ENCODE measurements at regions of chr11 and their contacts with region 1.

Region 1: DNA sequence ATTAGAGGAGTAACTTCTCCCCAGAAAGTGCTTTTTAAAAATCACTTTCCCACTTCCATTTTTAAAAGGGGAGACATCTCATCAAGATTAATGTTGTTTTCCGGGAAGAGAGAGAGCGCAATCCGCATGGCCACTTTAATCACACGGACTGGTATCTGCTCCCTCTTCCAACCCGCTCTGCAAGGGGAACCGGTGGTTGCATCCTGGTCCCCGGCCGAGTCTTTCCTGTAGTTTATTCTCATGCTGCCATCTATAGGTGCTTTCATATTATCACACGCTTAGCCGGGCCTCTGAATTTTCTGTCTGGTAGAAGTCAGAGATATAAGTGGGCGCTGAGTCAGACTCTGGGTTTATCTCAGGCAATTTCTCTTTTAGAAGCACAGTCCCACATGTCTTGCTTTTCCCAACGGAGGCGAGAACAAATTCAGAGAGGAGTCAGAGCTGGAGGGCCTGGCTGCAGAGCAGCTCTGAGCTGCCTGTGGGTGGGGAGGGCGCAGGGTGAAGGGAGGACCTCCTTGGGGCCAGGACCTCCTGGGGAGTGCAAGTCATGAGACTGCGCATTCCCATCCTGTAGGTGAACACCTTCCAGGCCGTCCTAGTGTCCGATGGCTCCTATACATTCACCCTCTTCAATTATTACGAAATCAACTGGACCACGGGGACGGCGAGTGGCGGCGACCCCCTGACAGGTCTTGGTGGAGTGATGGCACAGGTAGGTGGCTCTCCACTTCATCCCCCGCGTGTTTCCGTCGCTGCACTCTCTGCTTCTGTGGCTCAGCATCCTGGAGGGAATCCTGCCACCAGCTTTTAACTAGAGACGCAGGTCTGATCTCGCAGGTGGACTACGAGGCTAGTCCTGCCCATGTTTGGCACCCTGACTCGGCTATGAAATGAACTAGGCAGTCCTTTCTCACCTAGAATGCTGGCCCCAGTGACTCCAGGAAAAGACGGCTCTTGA is 11.7 kb downstream of the TECTA start:
- DNase-seq: peak in 6 of 9 donors; percentile 1 to 43 (median 30)
- ATAC-seq: peak; percentile 72
- H3K4me3 ChIP-seq: no peak overlapping the region
- H3K4me3 Mint-ChIP-seq: no peak overlapping the region
- H3K27ac ChIP-seq: no peak overlapping the region
- H3K27ac Mint-ChIP-seq: no peak overlapping the region
- H3K4me1 ChIP-seq: no peaks in the 10 kb centered on the region
- H3K4me1 Mint-ChIP-seq: peaks cover 0 to 5% (median 0%) of the 10 kb centered on the region in 7 donors
- H3K27me3 ChIP-seq: no peaks in the 10 kb centered on the region
- H3K27me3 Mint-ChIP-seq: peaks cover 5 to 32% (median 15%) of the 10 kb centered on the region in 5 donors

Region 2: GRCh38 chr11:120682866-120683265 is 429.9 kb before region 1 on chr11:
- CTCF ChIA-PET with region 1: no interaction called
- POLR2A ChIA-PET with region 1: no interaction called
- intact Hi-C with region 1: loop called in 1 of 2 experiments (anchors 10 kb)
- DNase-seq: no peak
- ATAC-seq: no peak
- H3K4me3 ChIP-seq: no peak overlapping the region
- H3K4me3 Mint-ChIP-seq: no peak overlapping the region
- H3K27ac ChIP-seq: no peak overlapping the region
- H3K27ac Mint-ChIP-seq: no peak overlapping the region
- H3K4me1 ChIP-seq: no peaks in the 10 kb centered on the region
- H3K4me1 Mint-ChIP-seq: peaks cover 0 to 1% (median 0%) of the 10 kb centered on the region in 7 donors
- H3K27me3 ChIP-seq: no peaks in the 10 kb centered on the region
- H3K27me3 Mint-ChIP-seq: peaks cover 7 to 49% (median 30%) of the 10 kb centered on the region in 5 donors

Region 3: GRCh38 chr11:120801801-120802689 is 310.7 kb before region 1 on chr11:
- CTCF ChIA-PET with region 1: no interaction called
- POLR2A ChIA-PET with region 1: no interaction called
- intact Hi-C with region 1: loop called in 1 of 2 experiments (anchors 5 kb)
- DNase-seq: peak in 7 of 9 donors; percentile 6 to 40 (median 19)
- ATAC-seq: peak; percentile 44
- H3K4me3 ChIP-seq: no peak overlapping the region
- H3K4me3 Mint-ChIP-seq: no peak overlapping the region
- H3K27ac ChIP-seq: no peak overlapping the region
- H3K27ac Mint-ChIP-seq: no peak overlapping the region
- H3K4me1 ChIP-seq: no peaks in the 10 kb centered on the region
- H3K4me1 Mint-ChIP-seq: peaks cover 0 to 8% (median 0%) of the 10 kb centered on the region in 7 donors
- H3K27me3 ChIP-seq: no peaks in the 10 kb centered on the region
- H3K27me3 Mint-ChIP-seq: peaks cover 6 to 27% (median 17%) of the 10 kb centered on the region in 5 donors

Region 4: DNA sequence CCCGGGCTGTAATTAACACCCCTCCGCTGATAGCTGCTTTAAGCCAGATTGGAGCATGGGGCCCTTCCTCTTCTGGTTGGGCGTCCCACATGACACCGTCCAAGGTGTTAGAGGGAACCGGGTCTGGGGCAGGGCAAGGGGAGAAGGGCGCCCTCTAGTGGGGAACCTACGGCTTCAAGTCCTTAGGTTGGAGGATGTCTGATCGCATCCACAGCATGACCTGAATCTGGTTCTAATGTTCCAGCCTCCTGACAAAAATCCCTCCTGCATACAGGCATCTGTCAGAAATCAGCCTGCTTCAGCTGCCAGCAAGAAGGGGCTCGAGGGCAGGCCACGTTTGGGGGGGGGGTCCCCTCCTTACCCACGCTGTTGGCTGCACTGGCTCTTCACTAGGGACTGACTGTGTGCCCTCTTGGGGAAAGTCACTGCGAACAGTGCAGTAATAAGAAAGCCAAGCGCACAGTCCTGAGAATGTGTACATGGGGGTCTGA is 183.1 kb before region 1 on chr11:
- CTCF ChIA-PET with region 1: no interaction called
- POLR2A ChIA-PET with region 1: no interaction called
- intact Hi-C with region 1: loop called (anchors 1 to 5 kb)
- DNase-seq: peak in 5 of 9 donors; percentile 5 to 45 (median 11)
- ATAC-seq: peak; percentile 79
- H3K4me3 ChIP-seq: no peak overlapping the region
- H3K4me3 Mint-ChIP-seq: no peak overlapping the region
- H3K27ac ChIP-seq: no peak overlapping the region
- H3K27ac Mint-ChIP-seq: no peak overlapping the region
- H3K4me1 ChIP-seq: no peaks in the 10 kb centered on the region
- H3K4me1 Mint-ChIP-seq: no peaks in the 10 kb centered on the region
- H3K27me3 ChIP-seq: no peaks in the 10 kb centered on the region
- H3K27me3 Mint-ChIP-seq: peaks cover 0 to 11% (median 6%) of the 10 kb centered on the region in 5 donors